OCI-LY7 (cell line): ENCODE measurements at regions of chr2 and their contacts with region 1.

Region 1: GRCh38 chr2:125745514-125745913 is 910.4 kb upstream of the GYPC start:
- DNase-seq: peak; percentile 1
- H3K4me3 ChIP-seq: no peak overlapping the region
- H3K27ac ChIP-seq: no peak overlapping the region
- H3K4me1 ChIP-seq: no peaks in the 10 kb centered on the region
- CTCF ChIP-seq: peak; percentile 40; the same call in 1 of the 2 replicates

Region 2: DNA sequence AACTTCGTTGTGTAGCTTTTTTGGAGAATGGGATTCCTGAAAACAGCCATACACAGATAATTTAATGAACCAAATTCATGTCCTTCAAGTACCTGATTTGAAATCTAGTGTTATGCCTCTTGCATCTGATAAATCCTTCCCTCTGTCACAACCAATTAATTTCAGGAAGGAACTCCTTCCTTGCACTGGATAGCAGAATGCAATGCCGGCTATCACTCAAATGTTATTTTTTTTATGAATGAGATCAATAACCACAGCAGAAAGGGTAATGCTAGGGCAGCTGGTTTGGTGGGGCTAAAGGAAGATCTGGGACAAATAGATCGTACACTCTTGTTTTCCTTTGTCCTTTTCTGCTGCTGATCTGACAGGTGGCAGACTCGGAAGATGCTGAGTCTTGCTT is 10.9 kb after region 1 on chr2:
- CTCF ChIA-PET with region 1: interaction called, 13 read pairs
- POLR2A ChIA-PET with region 1: interaction called, 3 read pairs
- intact Hi-C with region 1: no loop called
- DNase-seq: no peak
- H3K4me3 ChIP-seq: no peak overlapping the region
- H3K27ac ChIP-seq: no peak overlapping the region
- H3K4me1 ChIP-seq: no peaks in the 10 kb centered on the region
- CTCF ChIP-seq: no peak

Region 3: DNA sequence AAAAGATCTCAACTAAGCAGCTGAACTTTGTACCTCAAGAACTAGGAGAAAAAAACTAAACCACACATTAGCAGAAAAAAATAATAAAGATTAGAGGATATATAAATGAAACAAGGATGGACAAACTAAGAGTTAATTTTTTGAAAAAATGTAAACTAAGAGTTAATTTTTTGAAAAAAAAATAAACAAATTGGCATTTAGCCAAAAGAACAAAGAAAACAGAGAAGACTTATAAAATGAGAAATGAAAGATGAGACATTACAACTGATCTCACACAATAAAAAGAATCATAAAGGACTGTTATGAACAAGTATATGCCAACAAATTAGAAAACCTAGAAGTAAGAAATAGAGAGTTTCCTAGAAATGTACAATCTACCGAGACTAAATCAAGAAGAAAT is 51.3 kb after region 1 on chr2:
- CTCF ChIA-PET with region 1: no interaction called
- POLR2A ChIA-PET with region 1: interaction called, 4 read pairs
- intact Hi-C with region 1: loop called (anchors 2 kb)
- DNase-seq: no peak
- H3K4me3 ChIP-seq: no peak overlapping the region
- H3K27ac ChIP-seq: no peak overlapping the region
- H3K4me1 ChIP-seq: no peaks in the 10 kb centered on the region
- CTCF ChIP-seq: no peak